K562 (cell line): ENCODE measurements at regions of chr9 and their contacts with region 1.

Region 1: GRCh38 chr9:101848485-101848919 is 110.1 kb upstream of the GRIN3A start:
- DNase-seq: peak in 2 of 4 experiments; percentile 15 to 39
- ATAC-seq: peak; percentile 71
- H3K4me3 ChIP-seq: no peak overlapping the region
- H3K27ac ChIP-seq: peak overlapping the region; percentile 29; the same call in 1 of the 3 replicates
- H3K4me1 ChIP-seq: peaks cover 0 to 14% of the 10 kb centered on the region in 2 experiments; a peak in 3 of 5 replicates
- H3K27me3 ChIP-seq: no peaks in the 10 kb centered on the region
- CTCF ChIP-seq: no peak
- EP300 ChIP-seq: no peak
- POLR2A ChIP-seq: no peak
- RAD21 ChIP-seq: no peak

Region 2: GRCh38 chr9:101832486-101832885 is 16.0 kb before region 1 on chr9:
- CTCF ChIA-PET with region 1: no interaction called
- POLR2A ChIA-PET with region 1: no interaction called
- in situ Hi-C with region 1: no loop called
- intact Hi-C with region 1: no loop called
- DNase-seq: no peak
- ATAC-seq: no peak
- H3K4me3 ChIP-seq: no peak overlapping the region
- H3K27ac ChIP-seq: no peak overlapping the region
- H3K4me1 ChIP-seq: peaks cover 0 to 5% of the 10 kb centered on the region in 2 experiments; a peak in 1 of 5 replicates
- H3K27me3 ChIP-seq: no peaks in the 10 kb centered on the region
- CTCF ChIP-seq: no peak
- EP300 ChIP-seq: no peak
- POLR2A ChIP-seq: no peak
- RAD21 ChIP-seq: no peak

Region 3: DNA sequence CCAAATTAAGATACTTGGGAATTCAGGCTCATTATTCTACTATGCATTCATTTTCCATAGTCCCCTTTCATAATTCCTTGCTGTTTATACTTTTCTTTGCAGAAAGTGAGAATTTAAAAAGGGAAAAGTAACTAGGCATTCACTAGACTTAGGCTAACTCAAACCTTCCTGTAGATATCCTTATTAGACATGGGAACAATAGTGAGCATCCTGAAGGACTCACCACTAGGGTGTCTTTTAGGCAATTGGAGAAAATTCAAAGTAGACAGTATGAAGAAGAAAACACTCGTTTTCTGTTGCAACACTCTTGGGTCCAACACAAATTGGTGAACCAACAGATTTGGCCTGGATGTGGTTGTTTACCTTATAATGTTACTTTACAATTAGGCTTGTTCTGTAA is 103.1 kb after region 1 on chr9:
- CTCF ChIA-PET with region 1: no interaction called
- POLR2A ChIA-PET with region 1: no interaction called
- in situ Hi-C with region 1: no loop called
- intact Hi-C with region 1: loop called (anchors 5 kb)
- DNase-seq: no peak
- ATAC-seq: no peak
- H3K4me3 ChIP-seq: no peak overlapping the region
- H3K27ac ChIP-seq: no peak overlapping the region
- H3K4me1 ChIP-seq: no peaks in the 10 kb centered on the region
- H3K27me3 ChIP-seq: no peaks in the 10 kb centered on the region
- CTCF ChIP-seq: no peak
- EP300 ChIP-seq: no peak
- POLR2A ChIP-seq: no peak
- RAD21 ChIP-seq: no peak